Naive thymus-derived CD4-positive, alpha-beta T cell (primary cell): ENCODE measurements at regions of chr2 and their contacts with region 1.

Region 1: DNA sequence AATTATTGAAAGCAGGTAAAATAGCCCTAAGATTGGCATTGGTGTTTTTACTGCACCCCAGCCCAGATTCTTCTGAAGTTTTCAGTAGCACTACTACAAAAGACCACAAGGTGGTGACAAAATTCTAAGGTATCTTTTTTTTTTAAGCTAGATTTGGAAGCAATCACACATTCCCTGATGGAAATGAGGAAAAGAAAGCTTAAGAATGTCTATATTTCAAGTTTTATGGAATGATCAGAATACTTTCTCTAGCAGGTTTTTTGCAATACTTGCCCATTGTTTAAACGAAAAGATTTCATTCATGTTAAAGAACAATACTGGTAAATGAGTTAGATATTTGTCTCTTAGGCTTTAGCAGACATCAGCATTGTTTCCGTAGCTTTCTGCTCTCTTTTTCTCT is 32.1 kb upstream of the ZNF638 start:
- DNase-seq: peak in 5 of 9 donors; percentile 24 to 47 (median 36)
- ATAC-seq: peak; percentile 41
- H3K4me3 ChIP-seq: no peak overlapping the region
- H3K4me3 Mint-ChIP-seq: no peak overlapping the region
- H3K27ac ChIP-seq: no peak overlapping the region
- H3K27ac Mint-ChIP-seq: no peak overlapping the region
- H3K4me1 ChIP-seq: no peaks in the 10 kb centered on the region
- H3K4me1 Mint-ChIP-seq: no peaks in the 10 kb centered on the region
- H3K27me3 ChIP-seq: no peaks in the 10 kb centered on the region
- H3K27me3 Mint-ChIP-seq: peaks cover 4 to 14% (median 6%) of the 10 kb centered on the region in 5 donors

Region 2: DNA sequence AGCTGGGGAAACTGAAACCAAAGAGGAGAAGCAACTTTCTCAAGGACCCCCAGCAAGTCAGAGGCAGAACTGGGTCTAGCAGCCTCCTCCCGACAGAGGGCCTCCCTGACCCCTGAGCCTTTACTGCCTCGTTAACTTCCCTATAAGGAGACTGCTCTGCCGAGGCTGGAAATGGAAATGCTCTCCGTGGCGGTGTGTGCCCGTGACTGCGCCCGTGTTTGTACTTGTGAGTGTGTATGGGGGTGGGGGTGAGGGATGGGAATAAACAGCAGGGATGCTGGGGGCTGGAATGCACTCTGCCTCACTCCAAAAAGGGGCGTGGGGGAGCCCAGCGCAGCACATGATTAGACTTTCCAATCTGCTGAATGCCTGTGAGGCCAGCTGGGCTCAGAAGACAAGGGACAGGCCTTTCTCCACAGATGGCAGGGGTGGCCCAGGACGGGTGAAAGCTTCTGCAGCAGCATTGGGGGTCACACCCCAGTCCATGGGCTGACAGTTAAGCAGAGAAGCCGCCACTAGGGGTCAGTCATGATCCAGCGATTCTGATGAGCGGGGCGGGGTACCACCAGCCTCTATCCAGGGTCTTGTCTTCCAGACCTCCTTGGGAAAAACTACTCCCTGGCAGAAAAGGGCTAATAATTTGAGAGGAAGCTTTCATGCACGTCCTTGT is 142.2 kb before region 1 on chr2:
- CTCF ChIA-PET with region 1: interaction called, 6 read pairs
- POLR2A ChIA-PET with region 1: no interaction called
- intact Hi-C with region 1: loop called in 1 of 2 experiments (anchors 5 kb)
- DNase-seq: peak; percentile 16 to 53 (median 47)
- ATAC-seq: peak; percentile 83
- H3K4me3 ChIP-seq: no peak overlapping the region
- H3K4me3 Mint-ChIP-seq: peak overlapping the region in 2 of 10 donors; percentile 47 to 65
- H3K27ac ChIP-seq: no peak overlapping the region
- H3K27ac Mint-ChIP-seq: peak overlapping the region in 1 of 9 donors; percentile 63
- H3K4me1 ChIP-seq: no peaks in the 10 kb centered on the region
- H3K4me1 Mint-ChIP-seq: peaks cover 5 to 10% (median 7%) of the 10 kb centered on the region in 7 donors
- H3K27me3 ChIP-seq: no peaks in the 10 kb centered on the region
- H3K27me3 Mint-ChIP-seq: peaks cover 0 to 6% (median 4%) of the 10 kb centered on the region in 5 donors